OCI-LY7 (cell line): ENCODE measurements at regions of chr3 and their contacts with region 1.

Region 1: DNA sequence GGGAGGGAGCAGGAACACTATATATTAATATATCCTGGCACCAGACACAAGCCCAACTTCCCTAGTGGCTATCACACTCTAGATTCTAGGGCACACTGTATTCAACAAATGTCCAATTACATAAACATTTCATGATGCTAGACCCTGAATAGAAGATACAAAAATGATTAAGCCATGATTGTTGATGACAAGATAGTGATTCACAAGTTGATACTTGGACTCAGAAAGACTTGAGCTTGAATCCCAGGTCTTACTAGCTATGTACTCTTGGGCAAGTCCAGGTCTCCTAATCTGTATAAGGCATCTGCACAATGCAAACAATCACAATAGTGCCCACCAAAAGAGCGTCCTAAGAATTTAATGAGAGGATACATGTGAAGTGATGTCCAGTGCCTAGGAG is 10.0 kb upstream of the SNTN start:
- DNase-seq: no peak
- H3K4me3 ChIP-seq: no peak overlapping the region
- H3K27ac ChIP-seq: no peak overlapping the region
- H3K4me1 ChIP-seq: no peaks in the 10 kb centered on the region
- CTCF ChIP-seq: no peak

Region 2: GRCh38 chr3:65425880-65426279 is 1783.4 kb after region 1 on chr3:
- CTCF ChIA-PET with region 1: no interaction called
- POLR2A ChIA-PET with region 1: interaction called, 14 read pairs
- intact Hi-C with region 1: no loop called
- DNase-seq: no peak
- H3K4me3 ChIP-seq: no peak overlapping the region
- H3K27ac ChIP-seq: no peak overlapping the region
- H3K4me1 ChIP-seq: no peaks in the 10 kb centered on the region
- CTCF ChIP-seq: no peak